ENCODE measurements at regions of chr7 and their contacts with region 1.

Region 1: DNA sequence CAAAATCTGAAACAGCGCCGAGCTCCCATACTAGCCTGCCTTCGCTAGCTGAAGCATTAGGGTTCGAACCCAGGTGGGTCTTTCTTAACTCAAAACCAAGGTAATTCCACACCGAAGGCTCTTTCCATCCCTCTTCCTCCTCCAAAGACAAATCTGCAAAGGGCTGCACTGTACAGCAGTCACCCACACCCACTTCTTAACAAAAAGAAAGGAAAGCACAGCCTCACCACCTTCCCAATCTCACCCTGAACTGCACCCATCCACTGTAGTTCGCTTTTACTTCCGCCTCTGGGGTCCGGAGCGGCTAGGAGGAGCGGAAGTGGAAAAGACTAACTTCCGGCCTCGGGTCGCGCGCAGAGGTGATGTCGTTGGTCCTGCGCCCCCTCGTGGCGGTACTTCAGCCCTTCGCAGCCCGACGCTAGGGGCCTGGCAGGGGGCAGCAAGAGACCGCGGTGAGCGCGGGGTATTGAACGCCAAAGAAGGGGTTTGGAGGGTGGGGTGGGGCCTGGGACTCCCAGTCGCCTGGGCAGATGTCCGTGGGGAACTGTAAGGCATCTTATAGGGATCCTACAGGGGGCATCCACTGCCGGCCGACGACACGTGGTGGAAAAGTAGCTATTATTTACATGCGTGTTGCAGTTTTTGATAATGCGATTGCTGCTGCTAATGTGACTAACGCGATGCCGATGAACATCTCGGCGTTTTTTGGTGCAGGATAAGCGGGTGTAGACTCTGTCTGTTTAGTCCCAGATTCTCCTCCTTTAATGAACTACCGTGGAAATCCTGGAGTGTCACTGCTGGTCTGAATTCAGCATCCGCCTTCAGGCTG is at the start of gene MTERF1:
- DNase-seq: peak; percentile 96
- H3K4me3 Mint-ChIP-seq: peak within 1 kb of the TSS; percentile 95
- H3K27ac Mint-ChIP-seq: peak within 1 kb of the TSS; percentile 94
- H3K4me1 Mint-ChIP-seq: peaks cover 21% of the 10 kb centered on the region
- H3K27me3 Mint-ChIP-seq: no peaks in the 10 kb centered on the region
- total RNA-seq, gene MTERF1: 13.7 to 16.7 TPM

Region 2: GRCh38 chr7:91082852-91083495 is 797.7 kb before region 1 on chr7:
- CTCF ChIA-PET with region 1: interaction called, 3 read pairs
- intact Hi-C with region 1: loop called (anchors 2 kb)
- DNase-seq: no peak
- H3K4me3 Mint-ChIP-seq: peak overlapping the region; percentile 13
- H3K27ac Mint-ChIP-seq: no peak overlapping the region
- H3K4me1 Mint-ChIP-seq: peaks cover 36% of the 10 kb centered on the region
- H3K27me3 Mint-ChIP-seq: no peaks in the 10 kb centered on the region

Region 3: DNA sequence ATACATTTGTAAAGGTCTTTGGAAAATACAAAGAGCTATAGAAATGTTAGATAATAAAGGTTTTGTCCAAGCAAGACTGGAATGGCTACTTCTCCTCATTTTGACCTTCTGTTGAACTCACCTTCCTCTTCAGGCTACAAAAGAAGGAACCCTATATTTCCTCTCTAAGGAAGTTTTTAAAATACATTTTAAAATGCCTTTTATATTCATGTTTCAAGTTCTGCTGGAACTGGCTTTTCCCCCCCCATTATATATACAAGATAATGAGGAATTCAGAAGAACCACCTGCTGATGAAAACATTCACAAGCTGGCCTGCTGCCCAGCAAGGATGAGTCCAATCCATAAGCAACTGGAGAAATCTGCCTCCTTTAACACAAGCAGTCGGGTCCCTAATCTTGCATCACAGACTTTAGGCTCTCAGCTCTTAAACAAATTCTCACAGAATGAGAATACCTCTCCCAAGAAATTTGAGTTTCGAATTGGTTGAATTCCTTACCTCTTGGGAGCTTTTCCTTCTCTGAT is 44.7 kb before region 1 on chr7:
- CTCF ChIA-PET with region 1: interaction called, 17 read pairs
- intact Hi-C with region 1: no loop called
- DNase-seq: no peak
- H3K4me3 Mint-ChIP-seq: no peak overlapping the region
- H3K27ac Mint-ChIP-seq: no peak overlapping the region
- H3K4me1 Mint-ChIP-seq: no peaks in the 10 kb centered on the region
- H3K27me3 Mint-ChIP-seq: no peaks in the 10 kb centered on the region

Region 4: GRCh38 chr7:91953618-91954017 is 73.0 kb after region 1 on chr7:
- CTCF ChIA-PET with region 1: interaction called, 8 read pairs
- intact Hi-C with region 1: loop called (anchors 1 kb)
- DNase-seq: peak; percentile 10
- H3K4me3 Mint-ChIP-seq: no peak overlapping the region
- H3K27ac Mint-ChIP-seq: no peak overlapping the region
- H3K4me1 Mint-ChIP-seq: peaks cover 21% of the 10 kb centered on the region
- H3K27me3 Mint-ChIP-seq: no peaks in the 10 kb centered on the region

Region 5: DNA sequence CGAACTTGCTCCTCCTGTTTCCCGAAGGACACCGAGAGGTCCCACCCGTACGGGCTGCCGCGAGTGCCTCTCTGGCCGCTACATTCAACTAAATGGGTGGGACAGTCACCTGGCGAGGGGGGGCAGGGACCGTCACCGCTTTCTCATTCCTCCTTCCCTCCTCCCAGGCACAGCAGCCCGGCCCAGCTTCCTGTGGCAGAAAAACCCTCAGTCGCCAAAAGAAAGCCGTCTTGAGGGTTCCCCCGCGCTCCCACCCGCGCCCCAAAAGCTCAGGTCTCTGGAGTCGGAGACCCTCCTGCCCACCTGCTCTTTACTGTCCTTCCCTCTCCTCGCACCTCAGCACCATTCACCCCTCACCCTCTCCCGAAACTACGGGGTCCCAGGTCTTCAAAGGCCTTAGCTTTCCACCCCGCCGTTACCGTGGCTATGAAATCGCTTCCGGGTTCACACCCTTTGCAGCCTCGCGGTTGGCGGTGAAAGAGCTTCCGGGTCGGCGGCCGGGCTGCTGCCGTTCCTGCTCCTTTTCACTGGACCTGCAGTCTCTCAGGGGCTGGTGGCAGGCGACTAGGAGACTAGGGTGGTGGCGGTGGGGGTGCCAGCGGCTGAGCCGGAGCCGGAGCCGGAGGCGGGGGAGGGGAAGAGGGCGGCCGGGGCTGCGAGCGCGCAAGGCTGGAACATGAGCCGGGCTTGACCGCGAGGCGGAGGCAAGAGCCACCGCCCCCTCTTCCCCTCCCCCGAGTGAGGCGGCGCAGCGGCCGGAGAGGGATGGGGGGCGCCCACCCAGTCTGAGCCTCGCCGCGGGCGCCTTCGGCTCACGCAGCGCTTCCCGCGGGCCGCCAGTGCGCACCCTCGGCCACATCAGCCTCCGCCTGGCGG is 365.1 kb after region 1 on chr7 and contains the starts of genes ANKIB1 and KRIT1:
- CTCF ChIA-PET with region 1: no interaction called
- intact Hi-C with region 1: loop called (anchors 1 kb)
- DNase-seq: peak; percentile 91
- H3K4me3 Mint-ChIP-seq: peak within 1 kb of the TSS; percentile 92
- H3K27ac Mint-ChIP-seq: peak within 1 kb of the TSS; percentile 95
- H3K4me1 Mint-ChIP-seq: peaks cover 33% of the 10 kb centered on the region
- H3K27me3 Mint-ChIP-seq: no peaks in the 10 kb centered on the region
- total RNA-seq, gene ANKIB1: 37.9 to 38.4 TPM
- total RNA-seq, gene KRIT1: 21.5 to 27.9 TPM

Region 6: GRCh38 chr7:92528188-92528957 is 647.7 kb after region 1 on chr7 and contains the starts of genes PEX1 and RBM48:
- CTCF ChIA-PET with region 1: interaction called, 3 read pairs
- intact Hi-C with region 1: loop called (anchors 1 kb)
- DNase-seq: peak; percentile 97
- H3K4me3 Mint-ChIP-seq: peak within 1 kb of the TSS; percentile 84
- H3K27ac Mint-ChIP-seq: peak within 1 kb of the TSS; percentile 91
- H3K4me1 Mint-ChIP-seq: peaks cover 22% of the 10 kb centered on the region
- H3K27me3 Mint-ChIP-seq: no peaks in the 10 kb centered on the region
- total RNA-seq, gene PEX1: 12.9 to 13.2 TPM
- total RNA-seq, gene RBM48: 11.3 to 12.9 TPM